Dorsolateral prefrontal cortex (tissue), 120 donors: ENCODE measurements at regions of chr5 and their contacts with region 1.

Region 1: GRCh38 chr5:52997424-52997823 is 8.3 kb downstream of the ITGA2 start:
- DNase-seq: peak in 8 of 10 donors; percentile 50 to 83 (median 55)
- H3K4me3 ChIP-seq: peak overlapping the region in 17 of 59 donors; percentile 2 to 33 (median 20)
- H3K27ac ChIP-seq: peak overlapping the region; percentile 49 to 98 (median 93)
- H3K27me3 ChIP-seq: peaks cover 0 to 40% (median 15%) of the 10 kb centered on the region in 45 donors
- CTCF ChIP-seq: peak in 3 of 56 donors; percentile 2 to 16 (median 10)

Region 2: DNA sequence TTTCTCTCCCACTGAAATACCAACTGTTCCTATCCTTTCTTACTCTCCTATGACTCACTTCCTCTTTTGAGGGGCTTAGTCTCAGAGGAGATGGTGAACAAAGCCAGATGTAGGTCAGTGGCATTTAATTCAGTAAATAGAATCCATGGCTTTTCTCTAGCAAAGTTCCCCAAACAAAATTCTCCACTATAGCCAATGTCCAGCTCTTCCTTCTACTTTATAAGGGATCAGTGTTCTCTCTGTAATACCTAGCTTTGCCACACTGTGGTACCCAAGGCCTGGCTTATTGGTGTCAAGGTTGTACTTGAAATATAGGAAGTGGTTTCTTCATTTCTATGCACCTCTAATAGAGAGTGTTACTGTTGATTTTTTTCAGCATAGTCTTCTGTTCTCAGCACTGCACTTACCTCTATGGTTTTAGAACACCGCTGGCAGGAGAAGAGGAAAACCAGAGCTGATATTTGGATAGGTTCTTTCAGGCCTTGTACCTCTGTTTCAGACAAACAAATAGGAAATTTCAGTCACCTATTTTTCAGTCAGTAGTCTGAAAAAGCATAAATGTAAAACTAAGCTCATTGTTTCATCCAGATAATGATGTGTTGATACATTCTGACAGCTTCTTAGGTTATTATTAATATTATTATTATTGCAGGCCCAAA is 48.9 kb before region 1 on chr5:
- intact Hi-C with region 1: loop called in 1 of 2 experiments (anchors 2 kb)
- DNase-seq: peak in 7 of 10 donors; percentile 15 to 79 (median 44)
- H3K4me3 ChIP-seq: no peak overlapping the region
- H3K27ac ChIP-seq: peak overlapping the region in 10 of 59 donors; percentile 1 to 61 (median 23)
- H3K27me3 ChIP-seq: peaks cover 0 to 7% (median 0%) of the 10 kb centered on the region in 45 donors
- CTCF ChIP-seq: peak; percentile 55 to 93 (median 81)

Region 3: DNA sequence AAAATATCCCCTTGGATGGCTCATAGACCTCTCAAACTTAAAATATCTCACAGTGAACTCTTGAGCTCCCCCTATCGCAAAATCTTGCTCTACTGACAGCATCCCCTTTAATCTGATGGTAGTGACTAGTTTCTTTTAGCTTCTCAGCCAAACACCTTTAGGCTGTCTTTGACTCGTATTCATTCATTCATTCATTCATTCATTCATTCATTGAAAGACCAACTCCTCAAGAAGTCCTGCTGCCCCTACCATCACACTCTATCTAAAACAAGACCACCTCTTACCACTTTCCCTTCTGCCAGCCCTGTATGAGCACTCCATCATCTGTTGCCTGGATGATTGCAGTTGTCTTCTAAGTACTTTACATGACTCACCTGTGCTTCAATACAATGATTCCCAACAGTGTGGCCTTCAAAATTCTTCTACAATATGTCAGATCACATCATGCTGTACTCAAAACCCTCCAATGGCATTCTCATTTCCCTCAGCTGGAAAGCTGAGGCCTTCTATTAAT is 38.5 kb after region 1 on chr5:
- intact Hi-C with region 1: loop called in 1 of 2 experiments (anchors 5 kb)
- DNase-seq: no peak
- H3K4me3 ChIP-seq: no peak overlapping the region
- H3K27ac ChIP-seq: peak overlapping the region in 7 of 59 donors; percentile 7 to 87 (median 68)
- H3K27me3 ChIP-seq: peaks cover 0 to 2% (median 0%) of the 10 kb centered on the region in 45 donors
- CTCF ChIP-seq: peak in 32 of 56 donors; percentile 14 to 47 (median 31)

Region 4: DNA sequence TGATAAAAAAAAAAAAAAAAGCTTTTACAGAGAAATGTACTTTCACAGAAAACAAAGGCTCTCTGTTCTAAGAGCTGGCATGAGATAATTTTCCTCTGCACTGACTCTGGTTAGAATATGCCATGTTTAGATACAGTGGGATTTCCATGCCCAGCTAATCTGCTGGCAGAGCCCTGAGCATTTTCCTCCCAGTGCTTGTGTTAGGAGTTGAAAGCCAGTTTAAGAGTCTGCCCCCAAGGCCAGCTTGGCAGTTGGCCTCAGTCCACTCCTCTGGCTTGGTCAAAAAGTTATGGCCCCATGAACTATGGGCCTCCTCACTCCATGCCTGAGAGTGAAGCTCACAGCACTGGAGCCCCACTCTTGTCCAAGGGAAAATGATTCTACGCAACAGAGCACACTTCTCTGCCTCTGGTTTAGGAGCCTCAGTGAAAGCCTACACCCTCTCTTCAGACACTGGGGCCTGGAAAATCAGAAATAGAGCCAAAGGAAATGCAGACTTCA is 90.2 kb after region 1 on chr5:
- intact Hi-C with region 1: loop called in 1 of 2 experiments (anchors 1 kb)
- DNase-seq: peak in 9 of 10 donors; percentile 24 to 69 (median 51)
- H3K4me3 ChIP-seq: no peak overlapping the region
- H3K27ac ChIP-seq: peak overlapping the region in 52 of 59 donors; percentile 11 to 92 (median 81)
- H3K27me3 ChIP-seq: no peaks in the 10 kb centered on the region
- CTCF ChIP-seq: peak in 13 of 56 donors; percentile 1 to 32 (median 14)

Region 5: DNA sequence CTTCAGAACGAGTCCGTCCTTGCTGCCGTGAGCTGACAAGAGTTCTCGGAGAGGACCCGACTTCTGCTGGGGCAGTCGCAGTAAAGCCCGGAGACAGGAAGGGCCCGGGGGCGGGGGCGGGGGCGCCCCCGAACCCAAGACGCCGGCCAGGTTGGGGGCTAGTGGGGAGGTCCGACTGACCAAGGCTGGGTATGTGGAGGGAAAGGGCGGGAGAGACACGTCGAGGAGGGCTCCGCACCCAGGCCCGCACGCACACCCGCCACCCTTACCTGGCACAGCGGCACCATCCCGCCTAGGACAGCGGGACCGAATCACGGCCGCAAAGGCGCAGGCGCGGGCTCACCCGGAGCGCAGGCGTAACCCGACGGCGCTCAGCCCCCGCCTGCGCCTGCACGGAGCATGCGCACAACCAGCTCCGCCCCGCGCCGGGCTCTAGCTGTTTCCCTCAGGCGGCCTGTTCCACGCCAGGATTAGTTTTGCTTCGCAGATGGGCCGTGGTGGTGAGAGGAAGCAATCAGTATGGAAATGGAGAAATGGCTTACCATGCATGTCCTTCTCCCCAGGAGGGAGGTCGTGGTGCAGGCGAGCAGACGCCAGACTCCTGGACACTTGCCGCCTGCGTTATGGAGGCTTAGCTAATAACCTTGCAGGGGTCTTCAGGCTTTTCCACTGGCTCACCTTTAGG is 112.2 kb after region 1 on chr5 and contains the start of gene MOCS2:
- intact Hi-C with region 1: no loop called
- DNase-seq: peak; percentile 79 to 92 (median 84)
- H3K4me3 ChIP-seq: peak within 1 kb of the TSS; percentile 59 to 92 (median 80)
- H3K27ac ChIP-seq: peak within 1 kb of the TSS; percentile 13 to 92 (median 80)
- H3K27me3 ChIP-seq: no peaks in the 10 kb centered on the region
- CTCF ChIP-seq: peak in 34 of 56 donors; percentile 7 to 58 (median 29)
- total RNA-seq, gene MOCS2: 41.2 to 97.5 (median 69.3) TPM